Calu3 (cell line): ENCODE measurements at regions of chr5 and their contacts with region 1.

Region 1: DNA sequence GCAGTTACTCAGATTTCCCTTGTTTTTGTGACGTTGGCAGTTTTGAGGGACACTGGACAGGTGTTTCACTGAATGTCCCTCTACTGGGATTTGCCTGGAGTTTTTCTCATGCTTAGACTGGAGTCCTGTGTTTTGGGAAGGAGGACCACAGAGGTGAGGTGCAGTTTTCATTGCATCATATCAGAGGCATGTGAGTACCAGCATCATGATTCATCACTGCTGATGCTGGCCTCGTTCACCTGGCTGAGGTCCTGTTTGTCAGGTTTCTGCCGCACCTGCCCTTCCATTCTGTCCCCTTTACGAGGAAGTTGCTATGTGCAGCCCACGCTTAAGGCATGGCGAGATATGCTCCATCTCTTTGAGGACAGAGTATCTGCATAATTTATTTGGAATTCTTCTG is 162.1 kb downstream of the TENT4A start:
- DNase-seq: peak; percentile 73
- H3K4me3 Mint-ChIP-seq: no peak overlapping the region
- H3K27ac Mint-ChIP-seq: no peak overlapping the region
- H3K4me1 Mint-ChIP-seq: peaks cover 16% of the 10 kb centered on the region
- H3K27me3 Mint-ChIP-seq: peaks cover 11% of the 10 kb centered on the region
- CTCF ChIP-seq: no peak

Region 2: GRCh38 chr5:6905883-6906282 is 30.5 kb after region 1 on chr5:
- CTCF ChIA-PET with region 1: interaction called, 3 read pairs
- intact Hi-C with region 1: loop called (anchors 2 kb)
- DNase-seq: no peak
- H3K4me3 Mint-ChIP-seq: no peak overlapping the region
- H3K27ac Mint-ChIP-seq: no peak overlapping the region
- H3K4me1 Mint-ChIP-seq: no peaks in the 10 kb centered on the region
- H3K27me3 Mint-ChIP-seq: peaks cover 13% of the 10 kb centered on the region
- CTCF ChIP-seq: no peak